Psoas muscle (tissue), 8 donors: ENCODE measurements at regions of chr11 and their contacts with region 1.

Region 1: DNA sequence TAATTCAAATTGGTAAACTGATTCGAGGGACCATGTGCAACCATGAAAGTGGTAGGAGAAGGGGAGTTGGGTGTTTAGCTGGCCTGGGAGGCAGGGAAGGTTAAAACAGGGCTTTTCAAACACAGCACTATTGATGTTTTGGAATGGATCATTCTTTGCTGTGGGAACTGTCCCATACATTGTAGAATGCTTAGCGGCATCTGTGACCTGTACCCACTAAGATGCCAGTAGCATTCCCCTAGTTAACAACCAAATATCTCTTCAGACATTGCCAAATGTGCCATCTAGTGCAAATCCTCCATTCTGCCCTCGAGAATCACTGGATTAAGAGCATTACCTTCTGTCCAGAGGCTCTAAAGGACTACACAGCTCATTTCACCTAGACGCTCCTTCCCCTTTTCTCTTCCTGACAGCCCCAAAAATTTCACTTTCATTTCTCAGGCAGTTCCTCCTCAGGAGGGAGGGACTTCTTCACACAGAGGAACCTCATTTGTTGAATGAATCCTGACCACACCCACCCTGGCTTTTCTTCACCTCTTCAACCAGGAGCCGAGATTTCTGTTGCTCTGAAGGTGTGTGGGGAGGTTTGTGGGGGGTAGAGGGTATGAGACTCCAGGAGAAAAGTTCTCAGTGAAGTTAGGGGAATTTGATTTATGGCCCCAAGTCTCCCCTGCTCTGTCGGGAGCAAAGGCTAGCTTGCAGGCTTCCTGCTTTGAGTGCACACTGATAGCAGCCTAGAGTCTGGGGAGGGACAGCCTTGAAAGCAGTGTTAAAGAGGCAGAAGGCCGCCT is at the start of gene TRIM34:
- DNase-seq: no peak
- ATAC-seq: peak; percentile 40 to 77 (median 55)
- H3K4me3 ChIP-seq: peak within 1 kb of the TSS; percentile 66
- H3K27ac ChIP-seq: peak within 1 kb of the TSS; percentile 46
- H3K4me1 ChIP-seq: no peaks in the 10 kb centered on the region
- H3K27me3 ChIP-seq: no peaks in the 10 kb centered on the region
- CTCF ChIP-seq: no peak
- total RNA-seq, gene TRIM34: 0.48 to 1.3 (median 0.89) TPM

Region 2: DNA sequence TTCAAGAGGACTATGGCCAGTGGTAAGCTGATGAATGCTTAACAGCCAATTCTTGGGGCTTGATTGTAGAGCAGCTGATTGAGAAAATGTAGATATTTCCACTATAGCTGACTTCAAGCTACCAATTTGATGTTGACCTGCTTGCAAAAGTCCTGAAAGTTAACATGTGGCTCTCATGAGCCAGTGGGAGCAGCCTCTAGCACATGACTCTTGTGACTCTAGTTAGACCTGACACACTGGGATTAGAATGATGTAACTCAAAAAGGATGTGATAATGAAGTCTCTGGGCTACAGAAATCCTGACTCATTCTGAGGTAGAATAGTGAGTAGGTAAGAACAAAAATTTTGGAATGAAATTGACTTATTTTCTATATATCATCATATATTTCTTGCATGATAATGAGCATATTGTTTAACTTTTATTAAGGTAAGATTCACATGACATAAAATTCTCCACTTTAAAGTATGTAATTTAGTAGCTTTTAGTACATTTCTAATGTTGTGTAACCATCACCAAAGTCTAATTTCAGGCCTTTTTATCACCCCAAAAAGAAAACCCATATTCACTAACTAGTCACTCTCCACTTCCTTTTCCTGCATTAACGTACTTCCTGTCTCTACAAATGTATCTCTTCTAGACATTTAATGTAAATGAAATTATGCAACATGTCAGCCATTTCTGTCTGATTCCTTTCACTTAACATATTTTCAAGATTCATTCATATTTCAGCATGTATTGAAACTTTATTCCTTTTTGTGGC is 60.2 kb before region 1 on chr11:
- intact Hi-C with region 1: no loop called
- DNase-seq: no peak
- ATAC-seq: no peak
- H3K4me3 ChIP-seq: no peak overlapping the region
- H3K27ac ChIP-seq: no peak overlapping the region
- H3K4me1 ChIP-seq: no peaks in the 10 kb centered on the region
- H3K27me3 ChIP-seq: no peaks in the 10 kb centered on the region
- CTCF ChIP-seq: no peak

Region 3: DNA sequence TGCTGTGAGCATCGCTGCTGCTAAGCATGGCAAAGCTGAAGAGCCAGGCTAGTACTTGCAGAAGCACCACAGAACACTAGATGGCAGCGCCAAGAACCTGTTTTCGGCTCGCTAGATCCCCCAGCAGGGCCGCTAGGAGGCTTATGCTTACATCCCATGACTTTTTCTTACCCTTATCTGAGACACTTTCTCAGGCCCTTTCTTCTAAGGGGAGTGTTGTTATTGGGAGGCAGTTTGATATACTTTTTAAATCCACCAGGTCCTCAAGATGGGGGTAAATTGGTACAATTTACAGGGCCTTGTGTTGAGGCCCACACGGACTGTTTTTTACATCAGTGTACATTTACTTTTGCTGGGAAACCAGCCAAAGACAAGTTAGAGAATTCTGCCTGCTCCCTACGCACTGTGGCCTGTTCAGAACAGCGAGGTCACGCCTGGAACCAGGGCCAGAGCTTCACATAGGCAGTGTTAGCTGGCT is 24.3 kb before region 1 on chr11:
- intact Hi-C with region 1: no loop called
- DNase-seq: peak; percentile 51 to 67
- ATAC-seq: no peak
- H3K4me3 ChIP-seq: no peak overlapping the region
- H3K27ac ChIP-seq: no peak overlapping the region
- H3K4me1 ChIP-seq: no peaks in the 10 kb centered on the region
- H3K27me3 ChIP-seq: peaks cover 0 to 2% (median 0%) of the 10 kb centered on the region in 3 donors
- CTCF ChIP-seq: peak; percentile 49

Region 4: GRCh38 chr11:5690216-5690615 is 65.5 kb after region 1 on chr11:
- intact Hi-C with region 1: loop called in 1 of 2 experiments (anchors 5 kb)
- DNase-seq: no peak
- ATAC-seq: no peak
- H3K4me3 ChIP-seq: peak overlapping the region; percentile 62
- H3K27ac ChIP-seq: peak overlapping the region; percentile 68
- H3K4me1 ChIP-seq: no peaks in the 10 kb centered on the region
- H3K27me3 ChIP-seq: no peaks in the 10 kb centered on the region
- CTCF ChIP-seq: no peak